ENCODE measurements at regions of chr6 and their contacts with region 1.

Region 1: DNA sequence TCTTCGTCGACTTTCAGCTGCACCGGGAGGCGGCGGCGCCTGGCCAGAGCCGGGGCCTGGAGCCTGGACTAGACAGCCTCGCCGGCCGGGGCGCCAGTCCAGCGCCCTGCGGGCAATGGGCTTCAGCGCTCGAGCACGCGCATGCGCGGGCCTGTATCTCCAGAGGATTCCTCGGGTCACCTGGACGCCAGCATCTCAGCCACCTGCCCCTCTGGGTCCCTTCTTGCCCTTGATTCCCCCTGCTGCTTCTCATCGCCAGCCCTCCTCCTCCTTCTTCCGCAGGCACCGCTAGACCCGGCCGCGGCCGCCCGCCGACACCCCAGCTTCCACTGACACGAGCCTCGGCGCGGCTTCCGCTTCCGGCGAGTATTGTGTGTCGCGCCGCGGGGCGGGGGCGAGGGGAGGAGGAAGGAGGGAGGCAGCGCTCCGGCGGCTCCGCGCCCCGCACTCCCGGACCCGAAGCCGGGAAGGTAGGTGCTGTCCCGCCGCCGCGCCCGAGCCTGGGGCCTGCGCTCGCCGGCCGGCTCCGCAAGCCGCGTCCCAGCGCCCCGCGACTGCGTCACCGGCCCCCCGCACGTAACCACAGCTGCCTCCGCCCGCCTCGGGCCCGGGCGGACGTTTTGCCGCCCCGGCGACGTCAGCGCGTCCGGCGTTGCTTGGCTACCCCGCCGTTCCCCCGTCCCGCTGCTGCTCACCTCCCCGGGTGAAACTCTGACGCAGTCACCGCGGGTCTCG is at the start of gene TRIM39:
- DNase-seq: peak; percentile 93
- ATAC-seq: peak; percentile 60
- H3K4me3 Mint-ChIP-seq: peak within 1 kb of the TSS; percentile 86
- H3K27ac Mint-ChIP-seq: peak within 1 kb of the TSS; percentile 97
- H3K4me1 Mint-ChIP-seq: peaks cover 54% of the 10 kb centered on the region
- H3K27me3 Mint-ChIP-seq: no peaks in the 10 kb centered on the region
- total RNA-seq, gene TRIM39: 16.5 to 17.5 TPM

Region 2: DNA sequence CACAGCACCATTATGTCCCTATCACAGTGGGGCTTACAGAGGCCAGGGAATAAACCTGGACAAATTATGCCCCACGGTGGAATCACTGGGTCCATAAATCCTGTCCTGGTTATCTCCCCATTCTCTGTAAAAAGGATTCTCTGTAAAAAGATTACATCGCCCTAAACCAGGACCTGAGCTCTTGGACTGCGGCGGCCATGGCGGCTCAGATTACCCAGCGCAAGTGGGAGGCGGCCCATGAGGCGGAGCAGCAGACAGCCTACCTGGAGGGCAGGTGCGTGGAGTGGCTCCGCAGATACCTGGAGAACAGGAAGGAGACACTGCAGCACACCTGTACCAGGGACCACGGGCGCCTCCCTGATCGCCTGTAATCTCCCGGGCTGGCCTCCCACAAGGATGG is 392.7 kb before region 1 on chr6:
- CTCF ChIA-PET with region 1: no interaction called
- POLR2A ChIA-PET with region 1: no interaction called
- intact Hi-C with region 1: no loop called
- DNase-seq: no peak
- ATAC-seq: no peak
- H3K4me3 Mint-ChIP-seq: no peak overlapping the region
- H3K27ac Mint-ChIP-seq: no peak overlapping the region
- H3K4me1 Mint-ChIP-seq: peaks cover 19% of the 10 kb centered on the region
- H3K27me3 Mint-ChIP-seq: no peaks in the 10 kb centered on the region

Region 3: GRCh38 chr6:30066577-30067459 is 259.9 kb before region 1 on chr6 and contains the start of gene PPP1R11:
- CTCF ChIA-PET with region 1: no interaction called
- POLR2A ChIA-PET with region 1: interaction called, 6 read pairs
- intact Hi-C with region 1: loop called (anchors 1 to 5 kb)
- DNase-seq: peak; percentile 99
- ATAC-seq: peak; percentile 98
- H3K4me3 Mint-ChIP-seq: peak within 1 kb of the TSS; percentile 86
- H3K27ac Mint-ChIP-seq: peak within 1 kb of the TSS; percentile 97
- H3K4me1 Mint-ChIP-seq: peaks cover 53% of the 10 kb centered on the region
- H3K27me3 Mint-ChIP-seq: peaks cover 7% of the 10 kb centered on the region
- total RNA-seq, gene PPP1R11: 47.8 to 59.9 TPM

Region 4: GRCh38 chr6:30227763-30228487 is 98.8 kb before region 1 on chr6:
- CTCF ChIA-PET with region 1: interaction called, 6 read pairs
- POLR2A ChIA-PET with region 1: no interaction called
- intact Hi-C with region 1: loop called in 1 of 2 experiments (anchors 5 kb)
- DNase-seq: peak; percentile 26
- ATAC-seq: peak; percentile 92
- H3K4me3 Mint-ChIP-seq: no peak overlapping the region
- H3K27ac Mint-ChIP-seq: peak overlapping the region; percentile 70
- H3K4me1 Mint-ChIP-seq: peaks cover 15% of the 10 kb centered on the region
- H3K27me3 Mint-ChIP-seq: peaks cover 4% of the 10 kb centered on the region

Region 5: GRCh38 chr6:30311101-30311500 is 15.6 kb before region 1 on chr6:
- CTCF ChIA-PET with region 1: no interaction called
- POLR2A ChIA-PET with region 1: no interaction called
- intact Hi-C with region 1: no loop called
- DNase-seq: no peak
- ATAC-seq: no peak
- H3K4me3 Mint-ChIP-seq: no peak overlapping the region
- H3K27ac Mint-ChIP-seq: no peak overlapping the region
- H3K4me1 Mint-ChIP-seq: peaks cover 29% of the 10 kb centered on the region
- H3K27me3 Mint-ChIP-seq: no peaks in the 10 kb centered on the region

Region 6: GRCh38 chr6:30533460-30534294 is 207.0 kb after region 1 on chr6:
- CTCF ChIA-PET with region 1: no interaction called
- POLR2A ChIA-PET with region 1: no interaction called
- intact Hi-C with region 1: loop called in 1 of 2 experiments (anchors 1 kb)
- DNase-seq: no peak
- ATAC-seq: no peak
- H3K4me3 Mint-ChIP-seq: peak overlapping the region; percentile 63
- H3K27ac Mint-ChIP-seq: peak overlapping the region; percentile 92
- H3K4me1 Mint-ChIP-seq: peaks cover 58% of the 10 kb centered on the region
- H3K27me3 Mint-ChIP-seq: no peaks in the 10 kb centered on the region

Region 7: DNA sequence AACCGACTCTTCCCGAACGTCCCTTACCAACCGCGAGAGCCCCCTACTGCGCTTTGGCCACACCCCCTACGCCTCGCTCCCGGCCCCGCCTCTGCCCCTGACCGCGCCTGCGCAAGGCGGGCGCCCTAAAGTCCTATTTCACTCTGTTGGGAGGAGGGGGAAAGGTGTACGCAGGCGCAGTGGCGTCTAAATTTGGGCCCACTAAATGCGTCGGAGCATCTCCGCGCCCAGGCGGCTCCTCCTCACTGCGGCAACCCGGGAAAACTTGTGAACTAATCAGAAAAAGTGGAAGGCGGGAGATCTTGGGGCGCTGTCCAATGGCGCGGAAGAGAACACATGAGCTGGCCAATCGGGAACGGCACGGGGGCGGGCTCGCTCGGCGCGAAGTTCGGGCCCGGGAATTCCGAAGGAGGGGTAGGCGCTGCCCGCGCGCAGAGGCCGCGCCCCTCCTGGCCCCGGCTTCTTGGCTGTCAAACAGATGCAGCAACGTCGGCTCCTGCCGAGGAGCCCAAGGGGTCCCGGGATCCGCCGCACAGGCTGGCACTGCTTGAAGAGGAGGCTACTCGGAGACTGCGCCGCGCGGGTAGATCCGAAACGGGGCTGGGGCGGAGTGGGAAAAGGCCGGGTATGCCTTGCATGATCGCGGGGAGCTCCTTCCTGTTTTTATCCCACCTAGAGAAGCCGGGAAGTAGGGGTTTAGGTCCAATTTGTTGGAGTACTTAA is 831.6 kb after region 1 on chr6 and contains the start of gene TCF19:
- CTCF ChIA-PET with region 1: no interaction called
- POLR2A ChIA-PET with region 1: no interaction called
- intact Hi-C with region 1: loop called in 1 of 2 experiments (anchors 5 kb)
- DNase-seq: peak; percentile 99
- ATAC-seq: peak; percentile 90
- H3K4me3 Mint-ChIP-seq: peak within 1 kb of the TSS; percentile 97
- H3K27ac Mint-ChIP-seq: peak within 1 kb of the TSS; percentile 89
- H3K4me1 Mint-ChIP-seq: peaks cover 39% of the 10 kb centered on the region
- H3K27me3 Mint-ChIP-seq: no peaks in the 10 kb centered on the region
- total RNA-seq, gene TCF19: 82.6 to 88.0 TPM

Measured in activated CD4-positive, alpha-beta T cell treated with anti-CD3 and anti-CD28 coated beads for 36 hours (primary cell).